ENCODE measurements at regions of chr2 and their contacts with region 1.

Region 1: GRCh38 chr2:62415019-62415431 is 91.0 kb downstream of the TMEM17 start:
- DNase-seq: no peak
- H3K4me3 ChIP-seq: no peak overlapping the region
- H3K27ac ChIP-seq: no peak overlapping the region
- H3K4me1 ChIP-seq: peaks cover 25% of the 10 kb centered on the region
- H3K27me3 ChIP-seq: no peaks in the 10 kb centered on the region
- CTCF ChIP-seq: no peak

Region 2: GRCh38 chr2:61135510-61135909 is 1279.5 kb before region 1 on chr2:
- CTCF ChIA-PET with region 1: no interaction called
- POLR2A ChIA-PET with region 1: no interaction called
- intact Hi-C with region 1: loop called (anchors 10 kb)
- DNase-seq: peak in 1 of 2 experiments; percentile 41
- H3K4me3 ChIP-seq: no peak overlapping the region
- H3K27ac ChIP-seq: no peak overlapping the region
- H3K4me1 ChIP-seq: no peaks in the 10 kb centered on the region
- H3K27me3 ChIP-seq: no peaks in the 10 kb centered on the region
- CTCF ChIP-seq: peak; percentile 47; the same call in 1 of the 2 replicates

Region 3: DNA sequence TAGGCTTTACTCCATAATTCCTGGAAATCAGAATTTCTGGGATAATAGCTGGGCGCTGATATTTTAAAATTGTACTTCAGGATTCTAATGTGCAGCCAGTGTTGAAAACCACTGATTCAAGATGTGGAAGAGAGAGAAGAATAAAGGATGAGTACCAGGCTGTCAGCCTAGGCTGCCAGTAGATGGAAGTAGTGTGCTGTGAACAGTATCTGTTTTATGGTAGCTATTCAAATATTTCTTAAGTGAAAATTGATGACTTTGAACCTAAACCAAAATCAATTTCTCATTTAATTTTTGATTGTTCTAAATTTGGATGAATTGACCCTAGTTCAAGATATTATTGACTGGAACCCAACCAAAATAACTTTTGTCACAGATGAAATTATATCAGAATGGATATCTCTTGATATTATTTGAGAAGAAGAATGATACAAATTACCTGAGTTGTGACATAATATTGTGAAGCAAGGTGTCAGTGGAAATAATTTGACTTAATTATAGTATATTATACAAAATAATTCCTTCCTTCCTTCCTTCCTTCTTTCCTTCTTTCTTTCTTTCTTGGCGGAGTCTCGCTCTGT is 421.5 kb before region 1 on chr2:
- CTCF ChIA-PET with region 1: interaction called, 8 read pairs
- POLR2A ChIA-PET with region 1: no interaction called
- intact Hi-C with region 1: loop called (anchors 1 kb)
- DNase-seq: peak; percentile 26 to 53
- H3K4me3 ChIP-seq: no peak overlapping the region
- H3K27ac ChIP-seq: no peak overlapping the region
- H3K4me1 ChIP-seq: no peaks in the 10 kb centered on the region
- H3K27me3 ChIP-seq: no peaks in the 10 kb centered on the region
- CTCF ChIP-seq: peak; percentile 91

Region 4: GRCh38 chr2:62195421-62196277 is 219.4 kb before region 1 on chr2 and contains the start of gene B3GNT2:
- CTCF ChIA-PET with region 1: no interaction called
- POLR2A ChIA-PET with region 1: no interaction called
- intact Hi-C with region 1: loop called (anchors 1 kb)
- DNase-seq: peak; percentile 56 to 82
- H3K4me3 ChIP-seq: peak within 1 kb of the TSS; percentile 98
- H3K27ac ChIP-seq: peak within 1 kb of the TSS; percentile 70
- H3K4me1 ChIP-seq: peaks cover 29% of the 10 kb centered on the region
- H3K27me3 ChIP-seq: no peaks in the 10 kb centered on the region
- CTCF ChIP-seq: no peak
- total RNA-seq, gene B3GNT2: 30.8 and 30.9 TPM in 2 replicates

Region 5: DNA sequence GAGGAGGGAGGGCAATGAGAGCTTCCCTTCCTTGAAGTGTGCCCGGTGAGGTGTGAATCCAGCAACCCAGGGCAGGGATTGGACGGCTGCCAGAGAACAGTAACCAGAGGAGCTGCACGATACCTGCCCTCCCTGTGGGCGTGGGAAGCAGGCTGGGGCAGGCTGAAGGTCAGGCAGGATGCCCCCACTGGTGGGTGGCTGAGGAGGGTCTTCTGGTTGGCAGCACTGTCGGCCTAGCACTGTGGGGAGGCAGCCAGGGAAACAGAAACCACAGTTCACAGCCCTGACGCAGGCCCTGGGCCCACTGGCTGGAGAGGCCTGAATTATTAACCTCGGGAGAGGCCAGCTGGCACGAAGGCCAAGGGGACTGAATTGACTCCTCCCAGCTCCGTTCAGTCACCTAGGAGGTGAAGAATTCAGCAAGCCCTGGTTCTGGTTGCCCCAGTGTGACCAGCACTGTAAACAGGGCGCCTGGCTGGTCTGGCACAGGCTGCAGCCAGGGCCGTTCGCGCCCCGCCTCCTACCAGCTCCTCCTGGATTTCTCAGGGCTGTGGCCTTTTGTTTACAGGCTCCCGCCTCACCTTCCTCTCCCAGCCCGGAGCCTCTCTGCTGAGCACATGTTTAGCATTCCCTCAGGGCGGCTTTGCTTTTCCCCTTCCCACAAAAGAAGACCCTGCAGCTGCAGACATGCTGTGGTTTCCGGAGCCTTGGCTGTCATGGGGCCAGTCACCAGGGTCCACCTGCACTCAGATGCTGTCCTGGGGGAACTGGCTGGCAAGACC is 121.3 kb before region 1 on chr2:
- CTCF ChIA-PET with region 1: interaction called, 3 read pairs
- POLR2A ChIA-PET with region 1: no interaction called
- intact Hi-C with region 1: loop called (anchors 1 kb)
- DNase-seq: peak; percentile 94 to 95
- H3K4me3 ChIP-seq: peak overlapping the region; percentile 46; the same call in 1 of the 2 replicates
- H3K27ac ChIP-seq: peak overlapping the region; percentile 93
- H3K4me1 ChIP-seq: peaks cover 55% of the 10 kb centered on the region
- H3K27me3 ChIP-seq: no peaks in the 10 kb centered on the region
- CTCF ChIP-seq: no peak

Region 6: DNA sequence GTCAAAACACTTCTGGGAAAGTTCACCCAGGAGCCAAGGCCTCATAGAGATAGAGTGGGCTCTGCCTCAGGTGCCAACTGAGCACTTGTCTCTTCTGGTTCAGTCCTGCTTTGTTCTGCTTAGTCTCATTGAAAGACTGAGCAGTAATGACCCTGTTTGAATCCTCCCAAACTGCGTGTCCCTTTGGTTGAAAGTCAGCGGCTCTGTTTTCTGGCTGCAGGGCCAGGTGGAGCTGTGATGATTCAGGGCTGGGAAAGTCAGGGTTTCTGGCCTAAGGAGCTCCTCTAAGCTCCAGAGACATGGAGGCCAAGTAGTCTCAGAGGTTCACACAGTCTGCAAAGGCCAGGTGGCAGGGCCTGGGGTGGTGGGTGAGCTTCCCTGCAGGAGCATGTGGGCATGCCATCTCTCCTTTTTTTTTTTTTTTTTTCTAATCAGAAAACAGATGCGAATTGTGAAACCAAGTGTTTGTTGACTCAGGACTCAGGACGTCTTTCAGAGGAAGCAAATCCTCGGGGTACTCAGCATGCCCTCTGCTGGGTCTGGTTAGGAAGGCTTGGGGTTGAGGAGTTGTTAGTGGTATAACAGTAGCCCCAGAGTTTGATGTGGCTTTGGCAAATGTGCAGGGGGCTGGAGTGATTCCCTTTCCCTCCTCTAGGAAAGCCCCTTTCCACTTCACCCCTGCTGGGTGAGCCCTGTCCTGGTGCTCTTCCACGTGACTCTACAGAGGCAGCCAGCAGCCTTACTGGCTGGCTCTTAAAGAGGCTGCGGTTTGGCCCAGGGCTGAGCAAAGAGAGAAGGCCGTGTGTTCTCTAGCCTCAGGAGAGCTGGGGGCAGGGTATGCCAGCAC is 52.7 kb after region 1 on chr2:
- CTCF ChIA-PET with region 1: no interaction called
- POLR2A ChIA-PET with region 1: interaction called, 13 read pairs
- intact Hi-C with region 1: no loop called
- DNase-seq: no peak
- H3K4me3 ChIP-seq: no peak overlapping the region
- H3K27ac ChIP-seq: no peak overlapping the region
- H3K4me1 ChIP-seq: no peaks in the 10 kb centered on the region
- H3K27me3 ChIP-seq: no peaks in the 10 kb centered on the region
- CTCF ChIP-seq: no peak